Activated naive CD4-positive, alpha-beta T cell treated with anti-CD3 and anti-CD28 coated beads for 36 hours (primary cell): ENCODE measurements at regions of chr6 and their contacts with region 1.

Region 1: DNA sequence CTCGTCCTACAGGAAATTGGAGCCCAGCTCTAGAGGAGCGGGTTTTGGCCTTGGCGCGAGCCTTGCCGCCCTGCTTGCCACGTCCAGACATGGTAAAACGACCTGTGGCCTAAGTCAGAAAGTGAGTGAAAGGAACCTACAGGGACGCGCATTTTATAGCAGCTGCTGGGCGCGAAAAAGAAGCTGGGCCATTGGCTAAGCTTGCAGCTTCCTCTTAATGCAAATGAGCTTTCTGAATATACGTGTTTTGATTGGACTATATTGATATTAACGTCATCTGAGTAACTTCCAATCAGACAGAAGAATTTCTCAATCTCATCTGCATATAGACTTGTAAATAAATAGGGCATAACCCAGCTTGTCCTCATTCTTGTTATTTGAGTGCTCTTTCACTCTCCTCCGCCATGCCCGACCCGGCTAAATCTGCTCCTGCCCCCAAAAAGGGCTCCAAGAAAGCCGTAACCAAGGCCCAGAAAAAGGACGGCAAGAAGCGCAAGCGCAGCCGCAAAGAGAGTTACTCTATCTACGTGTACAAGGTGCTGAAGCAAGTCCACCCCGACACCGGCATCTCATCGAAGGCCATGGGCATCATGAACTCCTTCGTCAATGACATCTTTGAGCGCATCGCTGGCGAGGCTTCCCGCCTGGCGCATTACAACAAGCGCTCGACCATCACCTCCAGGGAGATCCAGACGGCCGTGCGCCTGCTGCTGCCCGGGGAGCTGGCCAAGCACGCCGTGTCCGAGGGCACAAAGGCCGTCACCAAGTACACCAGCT is 18.9 kb downstream of the OR2B2 start:
- DNase-seq: peak; percentile 93
- H3K4me3 Mint-ChIP-seq: no peak overlapping the region
- H3K27ac Mint-ChIP-seq: no peak overlapping the region
- H3K4me1 Mint-ChIP-seq: peaks cover 27% of the 10 kb centered on the region
- H3K27me3 Mint-ChIP-seq: peaks cover 2% of the 10 kb centered on the region

Region 2: GRCh38 chr6:25922301-25922700 is 1970.9 kb before region 1 on chr6:
- CTCF ChIA-PET with region 1: no interaction called
- intact Hi-C with region 1: no loop called
- DNase-seq: no peak
- H3K4me3 Mint-ChIP-seq: no peak overlapping the region
- H3K27ac Mint-ChIP-seq: no peak overlapping the region
- H3K4me1 Mint-ChIP-seq: peaks cover 25% of the 10 kb centered on the region
- H3K27me3 Mint-ChIP-seq: no peaks in the 10 kb centered on the region

Region 3: GRCh38 chr6:26054857-26055669 is 1838.2 kb before region 1 on chr6:
- CTCF ChIA-PET with region 1: no interaction called
- intact Hi-C with region 1: loop called (anchors 5 kb)
- DNase-seq: peak; percentile 95
- H3K4me3 Mint-ChIP-seq: peak overlapping the region; percentile 97
- H3K27ac Mint-ChIP-seq: peak overlapping the region; percentile 100
- H3K4me1 Mint-ChIP-seq: peaks cover 18% of the 10 kb centered on the region
- H3K27me3 Mint-ChIP-seq: peaks cover 11% of the 10 kb centered on the region

Region 4: GRCh38 chr6:27146706-27147505 is 746.3 kb before region 1 on chr6:
- CTCF ChIA-PET with region 1: no interaction called
- intact Hi-C with region 1: loop called (anchors 1 kb)
- DNase-seq: peak; percentile 87
- H3K4me3 Mint-ChIP-seq: no peak overlapping the region
- H3K27ac Mint-ChIP-seq: no peak overlapping the region
- H3K4me1 Mint-ChIP-seq: peaks cover 11% of the 10 kb centered on the region
- H3K27me3 Mint-ChIP-seq: no peaks in the 10 kb centered on the region

Region 5: GRCh38 chr6:27503436-27504030 is 389.7 kb before region 1 on chr6:
- CTCF ChIA-PET with region 1: no interaction called
- intact Hi-C with region 1: loop called (anchors 2 kb)
- DNase-seq: peak; percentile 88
- H3K4me3 Mint-ChIP-seq: peak overlapping the region; percentile 90
- H3K27ac Mint-ChIP-seq: peak overlapping the region; percentile 86
- H3K4me1 Mint-ChIP-seq: peaks cover 24% of the 10 kb centered on the region
- H3K27me3 Mint-ChIP-seq: peaks cover 1% of the 10 kb centered on the region

Region 6: DNA sequence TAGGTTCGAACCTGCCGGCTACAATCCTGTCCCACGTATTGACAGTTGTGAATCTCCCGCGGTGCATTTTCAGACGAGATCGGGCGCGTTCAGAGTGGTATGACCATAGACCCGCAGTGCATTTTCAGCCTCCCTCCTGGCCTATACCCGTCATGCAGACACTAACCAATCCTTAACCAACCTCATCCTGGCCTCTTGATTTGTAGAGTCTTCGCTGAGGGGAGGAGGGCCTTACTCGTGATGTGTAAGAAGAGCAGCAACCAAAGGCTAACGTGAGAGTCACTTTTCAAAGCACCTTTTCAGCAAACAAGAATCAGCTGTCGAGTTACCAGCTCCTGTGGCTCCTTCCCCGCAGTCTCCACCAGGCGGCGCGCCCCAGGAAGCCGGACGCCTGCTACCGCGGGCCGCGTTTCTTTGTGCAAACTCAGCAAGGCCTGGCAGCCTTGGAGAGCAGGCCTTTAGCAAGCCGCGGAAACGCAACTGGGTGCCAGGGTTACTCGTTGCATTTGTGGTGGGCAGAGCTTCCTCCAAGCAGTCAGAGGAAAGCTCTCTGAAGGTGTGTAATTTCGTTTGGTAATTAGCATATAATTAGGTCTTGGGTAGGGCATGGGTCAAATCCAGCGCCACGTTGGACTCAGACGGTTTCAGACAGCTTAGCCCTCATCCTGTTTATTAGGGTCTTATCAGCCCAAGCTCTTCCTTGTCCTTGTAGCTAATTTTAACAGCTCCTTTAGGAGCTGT is 120.8 kb before region 1 on chr6:
- CTCF ChIA-PET with region 1: interaction called, 14 read pairs
- intact Hi-C with region 1: loop called (anchors 1 kb)
- DNase-seq: peak; percentile 92
- H3K4me3 Mint-ChIP-seq: no peak overlapping the region
- H3K27ac Mint-ChIP-seq: no peak overlapping the region
- H3K4me1 Mint-ChIP-seq: peaks cover 6% of the 10 kb centered on the region
- H3K27me3 Mint-ChIP-seq: peaks cover 16% of the 10 kb centered on the region

Region 7: GRCh38 chr6:27864906-27865849 is 28.1 kb before region 1 on chr6:
- CTCF ChIA-PET with region 1: interaction called, 35 read pairs
- intact Hi-C with region 1: loop called (anchors 1 kb)
- DNase-seq: peak; percentile 84
- H3K4me3 Mint-ChIP-seq: peak overlapping the region; percentile 97
- H3K27ac Mint-ChIP-seq: peak overlapping the region; percentile 96
- H3K4me1 Mint-ChIP-seq: peaks cover 26% of the 10 kb centered on the region
- H3K27me3 Mint-ChIP-seq: peaks cover 8% of the 10 kb centered on the region

Region 8: GRCh38 chr6:28322661-28323060 is 429.4 kb after region 1 on chr6:
- CTCF ChIA-PET with region 1: no interaction called
- intact Hi-C with region 1: no loop called
- DNase-seq: no peak
- H3K4me3 Mint-ChIP-seq: no peak overlapping the region
- H3K27ac Mint-ChIP-seq: no peak overlapping the region
- H3K4me1 Mint-ChIP-seq: no peaks in the 10 kb centered on the region
- H3K27me3 Mint-ChIP-seq: no peaks in the 10 kb centered on the region

Region 9: DNA sequence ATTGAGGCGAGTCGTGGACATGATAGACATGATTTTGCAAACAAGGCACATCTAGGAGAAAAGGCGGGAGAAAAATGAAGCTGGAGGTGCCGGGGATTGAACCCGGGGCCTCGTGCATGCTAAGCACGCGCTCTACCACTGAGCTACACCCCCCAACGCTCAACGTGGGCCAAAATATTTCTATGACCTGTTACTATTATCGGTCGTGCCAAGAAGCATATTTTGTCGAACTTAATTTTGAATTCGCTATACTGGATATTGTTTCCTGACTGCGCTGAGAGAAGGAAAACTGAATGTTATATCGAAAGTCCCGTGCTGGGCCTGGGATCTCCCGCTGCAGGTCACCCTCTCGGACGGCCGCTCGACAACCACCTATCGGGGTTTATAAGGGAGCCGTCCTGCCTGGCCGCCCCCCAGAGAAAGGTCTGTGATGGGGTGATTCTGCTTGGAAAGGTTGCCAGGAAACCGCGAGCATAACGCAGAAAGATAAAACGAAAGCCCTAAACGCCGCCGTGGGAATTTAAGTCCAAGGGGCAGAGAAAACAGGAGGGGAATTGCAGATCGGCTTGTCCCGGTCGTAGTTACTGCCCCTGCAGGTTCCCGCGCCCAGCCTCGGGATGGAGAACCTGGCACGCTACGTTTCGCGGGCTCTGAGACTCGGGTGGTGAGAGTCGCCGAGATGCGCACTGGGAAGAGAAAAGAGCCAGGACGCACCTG is 970.5 kb after region 1 on chr6:
- CTCF ChIA-PET with region 1: interaction called, 3 read pairs
- intact Hi-C with region 1: loop called (anchors 5 kb)
- DNase-seq: peak; percentile 89
- H3K4me3 Mint-ChIP-seq: peak overlapping the region; percentile 86
- H3K27ac Mint-ChIP-seq: peak overlapping the region; percentile 92
- H3K4me1 Mint-ChIP-seq: peaks cover 33% of the 10 kb centered on the region
- H3K27me3 Mint-ChIP-seq: peaks cover 3% of the 10 kb centered on the region